Mucosa of descending colon (tissue), 3 donors: ENCODE measurements at regions of chr18 and their contacts with region 1.

Region 1: GRCh38 chr18:62128157-62128556 is 58.7 kb downstream of the PIGN start:
- DNase-seq: no peak
- ATAC-seq: no peak
- H3K4me3 ChIP-seq: no peak overlapping the region
- H3K4me1 ChIP-seq: no peaks in the 10 kb centered on the region
- CTCF ChIP-seq: no peak

Region 2: GRCh38 chr18:61551586-61551985 is 576.6 kb before region 1 on chr18:
- intact Hi-C with region 1: loop called in 1 of 2 experiments (anchors 10 kb)
- DNase-seq: peak in 1 of 3 donors; percentile 86
- ATAC-seq: peak; percentile 84
- H3K4me3 ChIP-seq: no peak overlapping the region
- H3K4me1 ChIP-seq: no peaks in the 10 kb centered on the region
- CTCF ChIP-seq: peak; percentile 44

Region 3: GRCh38 chr18:61791031-61791430 is 337.1 kb before region 1 on chr18:
- intact Hi-C with region 1: no loop called
- DNase-seq: no peak
- ATAC-seq: no peak
- H3K4me3 ChIP-seq: no peak overlapping the region
- H3K4me1 ChIP-seq: no peaks in the 10 kb centered on the region
- CTCF ChIP-seq: no peak

Region 4: DNA sequence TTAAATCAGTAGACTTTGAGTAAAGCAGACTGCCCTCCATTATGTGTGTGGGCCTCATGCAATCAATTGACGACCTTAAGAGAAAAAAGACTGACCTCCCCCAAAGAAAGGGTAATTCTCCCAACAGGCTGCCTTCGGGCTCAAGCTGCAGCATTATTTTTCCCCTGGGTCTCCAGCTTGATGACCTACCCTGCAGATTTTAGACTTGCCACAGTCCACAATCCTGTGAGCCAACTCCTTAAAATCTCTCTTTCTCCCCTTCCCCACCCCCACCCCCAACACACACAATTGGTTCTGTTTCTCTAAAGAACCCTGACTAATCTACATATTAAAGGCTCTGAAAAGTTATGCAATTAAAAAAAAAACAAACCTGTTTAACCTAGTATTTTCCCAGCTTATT is 324.8 kb before region 1 on chr18:
- intact Hi-C with region 1: loop called in 1 of 2 experiments (anchors 5 kb)
- DNase-seq: no peak
- ATAC-seq: no peak
- H3K4me3 ChIP-seq: no peak overlapping the region
- H3K4me1 ChIP-seq: no peaks in the 10 kb centered on the region
- CTCF ChIP-seq: no peak

Region 5: GRCh38 chr18:62069556-62069955 is 58.6 kb before region 1 on chr18:
- intact Hi-C with region 1: no loop called
- DNase-seq: no peak
- ATAC-seq: no peak
- H3K4me3 ChIP-seq: no peak overlapping the region
- H3K4me1 ChIP-seq: no peaks in the 10 kb centered on the region
- CTCF ChIP-seq: no peak